AG04449 (cell line): ENCODE measurements at regions of chr3 and their contacts with region 1.

Region 1: DNA sequence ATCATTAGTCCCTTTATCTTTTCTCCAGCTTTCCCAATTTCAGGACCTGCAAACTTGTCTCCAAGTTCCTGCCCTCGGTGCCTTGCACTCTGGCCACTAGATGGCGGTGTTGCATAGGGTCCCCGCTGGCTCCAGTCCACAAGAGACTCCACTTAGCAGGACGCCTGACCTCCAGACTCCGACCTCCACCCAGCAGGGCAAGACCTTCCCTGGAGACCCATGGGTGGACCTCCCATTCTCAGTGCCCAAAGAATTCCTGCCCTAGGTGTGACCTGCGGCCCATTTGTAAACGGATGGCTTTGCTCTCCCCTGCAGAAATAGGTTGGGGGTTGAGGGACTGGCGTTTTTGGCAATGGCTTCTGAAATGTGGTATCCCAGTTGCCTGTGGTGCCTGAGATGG is 82.6 kb downstream of the LSM3 start:
- DNase-seq: no peak
- H3K4me3 ChIP-seq: no peak overlapping the region; the same call in 1 of the 2 replicates
- CTCF ChIP-seq: peak; percentile 97

Region 2: GRCh38 chr3:13612829-13613228 is 648.4 kb before region 1 on chr3:
- CTCF ChIA-PET with region 1: no interaction called
- POLR2A ChIA-PET with region 1: no interaction called
- DNase-seq: no peak
- H3K4me3 ChIP-seq: no peak overlapping the region
- CTCF ChIP-seq: no peak

Region 3: DNA sequence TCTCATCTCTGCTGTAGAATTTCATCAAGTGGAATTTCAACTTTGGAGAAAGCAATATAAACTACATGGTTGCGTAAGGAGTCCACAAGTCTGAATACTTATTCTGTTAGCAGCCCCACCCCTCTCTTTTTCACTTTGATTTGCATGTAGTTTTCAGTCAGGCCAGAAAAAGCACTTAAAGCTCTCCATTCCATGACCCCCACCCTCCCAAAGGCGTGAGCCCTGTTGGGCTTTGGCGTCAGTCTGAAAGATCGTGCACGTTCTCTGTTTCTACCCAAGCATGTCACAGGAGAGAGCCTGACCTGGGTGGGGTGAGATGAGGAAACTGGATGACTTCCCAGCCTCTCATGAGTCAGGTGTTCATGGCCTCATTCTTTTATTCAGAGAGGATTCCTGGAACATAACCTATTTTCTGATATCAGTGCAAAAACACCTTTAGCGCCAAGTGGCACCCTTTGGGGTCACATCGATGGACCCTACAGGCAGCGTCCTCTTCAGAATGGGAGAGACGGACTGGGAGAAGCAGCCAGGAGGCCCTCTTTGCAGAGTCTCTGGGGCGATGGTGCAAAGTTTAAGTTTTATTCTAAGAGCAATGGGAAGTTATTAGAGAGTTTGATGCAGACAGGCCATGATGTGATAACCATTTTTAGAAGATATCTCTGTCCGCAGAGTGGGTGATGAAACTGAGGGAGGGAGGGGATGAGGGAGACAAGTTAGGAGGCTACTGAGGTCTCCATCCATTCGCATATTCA is 26.8 kb before region 1 on chr3:
- CTCF ChIA-PET with region 1: interaction called, 22 read pairs
- POLR2A ChIA-PET with region 1: no interaction called
- DNase-seq: no peak
- H3K4me3 ChIP-seq: no peak overlapping the region
- CTCF ChIP-seq: no peak

Region 4: GRCh38 chr3:14274999-14275961 is 14.1 kb after region 1 on chr3:
- CTCF ChIA-PET with region 1: interaction called, 52 read pairs
- POLR2A ChIA-PET with region 1: no interaction called
- DNase-seq: no peak
- H3K4me3 ChIP-seq: no peak overlapping the region
- CTCF ChIP-seq: no peak

Region 5: GRCh38 chr3:14413381-14414071 is 152.3 kb after region 1 on chr3:
- CTCF ChIA-PET with region 1: interaction called, 18 read pairs
- POLR2A ChIA-PET with region 1: no interaction called
- DNase-seq: no peak
- H3K4me3 ChIP-seq: no peak overlapping the region
- CTCF ChIP-seq: no peak

Region 6: GRCh38 chr3:14467814-14468620 is 206.8 kb after region 1 on chr3:
- CTCF ChIA-PET with region 1: interaction called, 188 read pairs
- POLR2A ChIA-PET with region 1: no interaction called
- DNase-seq: no peak
- H3K4me3 ChIP-seq: no peak overlapping the region
- CTCF ChIP-seq: peak; percentile 87